Aorta (tissue), 5 donors: ENCODE measurements at regions of chr6 and their contacts with region 1.

Region 1: GRCh38 chr6:145798530-145798929 is 16.1 kb downstream of the FBXO30 start:
- DNase-seq: no peak
- ATAC-seq: no peak
- H3K4me3 ChIP-seq: no peak overlapping the region
- H3K27ac ChIP-seq: no peak overlapping the region
- H3K4me1 ChIP-seq: peaks cover 0 to 4% of the 10 kb centered on the region in 2 donors
- H3K27me3 ChIP-seq: no peaks in the 10 kb centered on the region

Region 2: DNA sequence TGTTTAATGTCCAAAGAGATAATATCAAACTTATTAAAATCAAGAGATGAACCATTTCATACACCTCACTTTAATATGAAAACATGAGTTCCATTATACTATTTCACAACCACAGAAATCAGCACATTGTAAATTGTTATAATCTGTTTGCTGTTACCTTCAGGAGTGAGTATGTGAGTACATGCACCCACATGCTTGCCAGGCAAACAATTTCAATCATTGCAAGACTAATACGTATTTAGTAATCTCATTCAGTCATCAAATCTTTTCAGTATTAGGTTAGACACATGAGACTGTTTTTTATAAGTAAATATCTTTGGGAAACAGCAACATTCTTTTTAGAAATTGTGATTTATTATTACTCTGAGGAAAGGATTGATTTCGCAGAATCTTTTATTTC is 53.9 kb before region 1 on chr6:
- intact Hi-C with region 1: loop called in 1 of 2 experiments (anchors 5 kb)
- DNase-seq: no peak
- ATAC-seq: no peak
- H3K4me3 ChIP-seq: no peak overlapping the region
- H3K27ac ChIP-seq: no peak overlapping the region
- H3K4me1 ChIP-seq: peaks cover 0 to 1% of the 10 kb centered on the region in 2 donors
- H3K27me3 ChIP-seq: no peaks in the 10 kb centered on the region